ENCODE measurements at regions of chr13 and their contacts with region 1.

Region 1: DNA sequence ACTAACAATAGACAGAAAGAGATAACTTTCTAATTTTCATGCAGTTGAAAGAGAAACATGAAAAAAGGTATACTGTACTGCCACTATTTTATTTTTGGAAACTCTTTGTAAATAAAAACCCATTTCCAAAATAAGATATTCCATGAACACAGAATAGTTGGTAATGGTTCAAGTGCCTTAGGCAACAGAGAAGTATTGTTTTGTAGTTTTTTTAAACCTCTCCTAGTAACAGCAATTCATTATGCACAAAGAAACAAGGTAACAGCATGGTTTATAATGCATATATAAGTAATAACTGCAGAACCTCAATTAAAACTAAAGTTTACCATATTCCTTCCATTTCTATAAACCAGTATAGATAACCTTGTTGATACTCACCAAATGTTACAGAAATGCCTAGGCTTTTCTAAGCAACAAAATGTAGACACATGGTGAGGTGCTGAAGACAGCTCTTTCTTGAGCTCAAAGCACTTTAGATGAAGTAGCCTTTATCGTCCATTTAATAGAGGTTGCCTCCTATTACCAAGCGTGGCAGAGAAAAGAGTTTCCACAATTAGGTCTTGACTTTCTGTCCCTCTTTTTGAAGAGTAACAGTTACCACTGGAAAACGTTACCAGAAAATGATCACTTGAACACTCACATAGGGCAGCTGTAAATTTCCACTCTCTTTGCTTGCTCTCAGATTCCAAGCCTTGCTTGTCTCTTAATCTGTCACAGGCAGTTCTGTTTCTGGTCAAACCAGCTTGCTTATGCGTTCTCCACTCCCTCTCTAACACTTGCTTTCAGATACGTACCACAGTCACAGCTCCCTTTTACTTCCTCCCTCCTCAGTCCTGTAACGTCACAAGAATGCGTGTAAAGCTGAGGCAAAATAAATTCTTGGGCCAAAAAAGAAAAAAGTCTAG is 42.9 kb downstream of the CAB39L start:
- DNase-seq: peak; percentile 54
- H3K4me3 ChIP-seq: no peak overlapping the region
- H3K27me3 ChIP-seq: no peaks in the 10 kb centered on the region
- CTCF ChIP-seq: no peak

Region 2: GRCh38 chr13:49421391-49421790 is 20.4 kb after region 1 on chr13:
- CTCF ChIA-PET with region 1: no interaction called
- POLR2A ChIA-PET with region 1: interaction called, 10 read pairs
- DNase-seq: no peak
- H3K4me3 ChIP-seq: no peak overlapping the region
- H3K27me3 ChIP-seq: no peaks in the 10 kb centered on the region
- CTCF ChIP-seq: no peak

Measured in BJ (cell line).